RWPE1 (cell line): ENCODE measurements at regions of chr21 and their contacts with region 1.

Region 1: GRCh38 chr21:42220138-42220701 is 1.3 kb downstream of the ABCG1 start:
- DNase-seq: peak; percentile 69
- H3K27ac ChIP-seq: peak overlapping the region; percentile 77
- CTCF ChIP-seq: no peak

Region 2: DNA sequence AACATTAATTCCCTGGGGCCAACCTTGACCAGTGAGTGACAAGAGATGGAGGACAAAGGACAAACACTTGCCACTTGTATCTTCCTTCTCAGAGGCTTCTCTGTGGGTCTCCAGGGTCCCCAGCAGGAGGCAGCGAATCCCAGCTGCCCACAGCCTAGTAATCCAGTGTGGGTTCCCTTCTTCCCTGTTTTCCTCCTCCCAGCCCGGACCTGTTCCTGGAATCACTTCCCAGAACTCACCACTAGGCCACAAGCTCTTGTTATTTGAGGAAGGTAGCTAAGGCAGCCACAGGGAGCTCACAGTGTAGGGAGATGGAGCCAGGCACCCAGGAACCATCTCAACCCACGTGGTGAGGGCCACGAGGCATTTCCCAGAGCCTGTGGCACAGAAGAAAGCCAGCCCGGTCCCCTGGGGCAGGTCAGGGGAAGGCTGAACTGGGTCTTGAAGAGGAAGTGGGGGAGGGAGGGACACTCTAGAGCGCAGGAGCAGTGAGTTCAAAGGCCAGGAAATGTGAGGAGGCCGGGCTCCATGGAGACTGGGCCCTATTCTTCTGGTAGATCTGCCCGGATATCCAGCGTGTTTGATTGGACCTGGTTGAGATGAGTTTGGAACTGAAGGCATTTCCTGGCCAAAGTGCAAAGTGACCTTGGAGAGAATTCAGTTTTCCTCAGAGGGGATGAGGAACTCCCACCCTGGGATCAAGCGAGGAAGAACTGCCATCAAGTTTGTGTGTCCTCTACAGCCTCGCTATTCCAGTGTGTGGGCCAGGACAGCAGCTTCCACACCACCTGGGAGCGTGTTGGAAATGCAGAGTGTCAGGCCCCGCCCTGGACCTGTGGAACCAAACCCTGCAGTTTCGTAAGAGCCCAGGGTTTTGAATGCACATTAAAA is 246.1 kb before region 1 on chr21:
- CTCF ChIA-PET with region 1: no interaction called
- POLR2A ChIA-PET with region 1: no interaction called
- DNase-seq: no peak
- H3K27ac ChIP-seq: no peak overlapping the region
- CTCF ChIP-seq: no peak

Region 3: GRCh38 chr21:42122808-42123207 is 97.4 kb before region 1 on chr21:
- CTCF ChIA-PET with region 1: no interaction called
- POLR2A ChIA-PET with region 1: no interaction called
- DNase-seq: no peak
- H3K27ac ChIP-seq: peak overlapping the region; percentile 51; the same call in 1 of the 2 replicates
- CTCF ChIP-seq: no peak

Region 4: GRCh38 chr21:42145569-42146272 is 74.5 kb before region 1 on chr21:
- CTCF ChIA-PET with region 1: interaction called, 11 read pairs
- POLR2A ChIA-PET with region 1: no interaction called
- DNase-seq: peak; percentile 86
- H3K27ac ChIP-seq: no peak overlapping the region
- CTCF ChIP-seq: peak; percentile 89